Activated B cell treated with CpG ODN at 0.5 μM for 24 hours (primary cell): ENCODE measurements at regions of chr11 and their contacts with region 1.

Region 1: GRCh38 chr11:18115360-18116127 is 9.7 kb upstream of the SAAL1 start:
- DNase-seq: peak; percentile 36
- ATAC-seq: peak; percentile 93
- H3K4me3 Mint-ChIP-seq: no peak overlapping the region
- H3K27ac Mint-ChIP-seq: no peak overlapping the region
- H3K4me1 Mint-ChIP-seq: peaks cover 4% of the 10 kb centered on the region
- H3K27me3 Mint-ChIP-seq: peaks cover 14% of the 10 kb centered on the region
- CTCF ChIP-seq: peak; percentile 64

Region 2: DNA sequence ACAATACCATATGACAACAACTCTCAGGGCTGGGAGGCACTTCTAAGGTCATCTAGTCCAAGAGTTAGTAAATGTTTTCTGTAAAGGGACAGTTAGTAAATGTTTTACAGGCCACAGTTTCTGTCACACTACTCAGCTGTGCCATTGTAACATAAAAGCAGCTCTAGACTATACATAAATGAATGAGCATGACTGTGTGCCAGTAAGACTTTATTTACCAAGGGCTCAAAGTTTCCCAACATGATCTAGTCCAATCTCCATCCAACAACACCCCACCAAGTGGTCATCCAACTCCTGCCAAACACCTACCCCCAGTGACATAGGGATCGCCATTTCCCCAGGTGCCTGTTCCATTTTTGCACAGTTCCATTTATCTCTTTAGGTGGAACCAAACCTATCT is 114.8 kb before region 1 on chr11:
- CTCF ChIA-PET with region 1: no interaction called
- POLR2A ChIA-PET with region 1: no interaction called
- intact Hi-C with region 1: no loop called
- DNase-seq: no peak
- ATAC-seq: no peak
- H3K4me3 Mint-ChIP-seq: no peak overlapping the region
- H3K27ac Mint-ChIP-seq: no peak overlapping the region
- H3K4me1 Mint-ChIP-seq: no peaks in the 10 kb centered on the region
- H3K27me3 Mint-ChIP-seq: no peaks in the 10 kb centered on the region
- CTCF ChIP-seq: no peak

Region 3: DNA sequence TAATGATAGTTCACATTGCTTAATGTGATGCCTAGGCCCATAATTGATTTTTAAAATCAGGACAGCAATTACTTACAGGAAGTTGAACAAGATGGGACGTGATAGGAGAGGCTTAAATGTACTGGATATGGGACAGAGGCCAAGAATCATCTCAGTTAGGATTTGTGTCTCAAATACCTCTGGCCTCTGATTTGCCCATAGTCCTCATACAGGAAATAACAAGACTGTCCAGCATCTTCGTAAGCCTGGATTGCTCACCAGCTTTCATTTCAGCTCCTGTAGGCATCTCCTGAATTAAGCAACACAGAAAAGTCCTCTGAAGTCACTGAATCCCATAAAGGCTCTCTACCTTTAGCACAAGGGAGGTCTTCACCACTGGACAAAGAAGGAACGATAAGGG is 16.8 kb after region 1 on chr11 and contains the start of gene MRGPRX3:
- CTCF ChIA-PET with region 1: no interaction called
- POLR2A ChIA-PET with region 1: no interaction called
- intact Hi-C with region 1: no loop called
- DNase-seq: no peak
- ATAC-seq: no peak
- H3K4me3 Mint-ChIP-seq: no peak within 1 kb of the TSS
- H3K27ac Mint-ChIP-seq: no peak within 1 kb of the TSS
- H3K4me1 Mint-ChIP-seq: no peaks in the 10 kb centered on the region
- H3K27me3 Mint-ChIP-seq: peaks cover 42% of the 10 kb centered on the region
- CTCF ChIP-seq: no peak
- total RNA-seq, gene MRGPRX3: not detected in 2 replicates

Region 4: GRCh38 chr11:18540207-18541009 is 424.9 kb after region 1 on chr11:
- CTCF ChIA-PET with region 1: no interaction called
- POLR2A ChIA-PET with region 1: no interaction called
- intact Hi-C with region 1: loop called (anchors 1 kb)
- DNase-seq: no peak
- ATAC-seq: peak; percentile 21
- H3K4me3 Mint-ChIP-seq: no peak overlapping the region
- H3K27ac Mint-ChIP-seq: no peak overlapping the region
- H3K4me1 Mint-ChIP-seq: no peaks in the 10 kb centered on the region
- H3K27me3 Mint-ChIP-seq: no peaks in the 10 kb centered on the region
- CTCF ChIP-seq: no peak

Region 5: DNA sequence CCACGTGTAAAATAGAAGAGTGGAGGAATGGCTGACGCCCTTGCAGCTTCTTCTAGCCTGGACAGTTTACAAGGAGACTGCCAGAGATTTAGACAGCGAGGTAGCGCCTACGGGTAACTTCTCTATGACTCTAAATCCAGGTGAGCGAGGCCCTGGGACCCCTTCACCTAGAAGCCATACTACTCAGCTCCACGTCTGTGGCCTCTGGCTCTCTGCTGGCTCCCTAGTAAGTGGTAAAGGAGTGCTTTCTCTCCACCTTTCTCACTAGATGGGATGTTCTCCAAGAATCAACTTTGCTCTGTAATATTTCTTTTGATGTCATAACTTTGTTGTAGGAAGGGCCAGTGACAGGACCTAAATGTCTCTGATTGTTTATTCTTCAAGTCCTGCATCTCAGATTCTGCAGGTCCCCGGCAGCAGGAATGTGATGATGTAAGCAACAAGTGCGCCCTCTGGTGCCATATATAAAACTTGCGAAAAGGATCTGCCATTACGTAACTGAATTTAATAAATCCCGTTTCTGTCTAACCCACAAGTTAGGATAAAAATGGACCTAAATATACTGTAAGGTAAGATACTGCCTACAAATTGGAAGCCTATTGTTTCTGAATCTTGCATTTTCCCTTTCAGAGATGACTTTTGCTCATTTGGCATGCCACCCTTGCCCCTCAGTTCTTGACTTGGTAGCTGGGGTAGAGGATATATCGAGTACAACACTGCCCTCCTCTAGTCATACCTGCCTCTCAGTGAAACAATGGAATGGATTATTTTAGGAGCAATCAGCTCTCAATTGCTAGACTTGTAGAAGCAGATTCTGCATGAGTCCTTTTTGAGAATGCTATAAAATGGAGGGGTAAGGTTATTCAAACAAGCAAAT is 687.1 kb after region 1 on chr11:
- CTCF ChIA-PET with region 1: interaction called, 7 read pairs
- POLR2A ChIA-PET with region 1: no interaction called
- intact Hi-C with region 1: loop called (anchors 1 kb)
- DNase-seq: no peak
- ATAC-seq: no peak
- H3K4me3 Mint-ChIP-seq: no peak overlapping the region
- H3K27ac Mint-ChIP-seq: no peak overlapping the region
- H3K4me1 Mint-ChIP-seq: no peaks in the 10 kb centered on the region
- H3K27me3 Mint-ChIP-seq: peaks cover 18% of the 10 kb centered on the region
- CTCF ChIP-seq: no peak

Region 6: DNA sequence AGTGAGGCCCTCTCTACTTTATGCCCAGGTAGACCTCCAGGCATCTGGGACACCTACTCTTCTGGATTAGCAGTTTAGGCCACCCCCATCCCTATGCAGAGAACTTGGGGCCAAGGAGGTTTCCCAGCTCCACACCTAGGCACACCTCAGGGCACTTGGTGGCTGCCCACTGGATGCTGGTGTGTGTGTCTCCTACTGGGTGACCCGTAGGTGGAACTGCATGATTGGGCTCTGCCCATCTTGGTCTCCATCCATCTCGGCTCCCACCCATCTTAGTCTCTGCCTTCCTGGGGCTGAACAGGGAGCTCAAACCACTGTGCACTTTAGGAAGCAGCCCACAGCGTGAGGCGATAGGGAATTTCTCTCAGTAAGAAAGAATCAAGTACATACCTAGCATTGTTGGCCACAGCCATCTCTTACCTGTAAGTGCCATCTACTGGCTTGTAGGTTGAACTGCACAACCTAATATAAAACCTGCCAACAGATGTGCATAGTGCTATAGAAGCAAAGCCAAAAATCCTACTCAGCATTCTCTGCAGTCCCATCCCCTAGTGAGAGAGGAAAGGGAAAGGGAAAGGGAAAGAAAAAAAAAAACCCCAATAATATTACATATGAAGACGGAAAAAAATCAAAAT is 737.7 kb after region 1 on chr11:
- CTCF ChIA-PET with region 1: no interaction called
- POLR2A ChIA-PET with region 1: no interaction called
- intact Hi-C with region 1: loop called (anchors 2 kb)
- DNase-seq: no peak
- ATAC-seq: no peak
- H3K4me3 Mint-ChIP-seq: no peak overlapping the region
- H3K27ac Mint-ChIP-seq: no peak overlapping the region
- H3K4me1 Mint-ChIP-seq: no peaks in the 10 kb centered on the region
- H3K27me3 Mint-ChIP-seq: peaks cover 25% of the 10 kb centered on the region
- CTCF ChIP-seq: no peak